Naive thymus-derived CD4-positive, alpha-beta T cell (primary cell): ENCODE measurements at regions of chr16 and their contacts with region 1.

Region 1: GRCh38 chr16:53054670-53055485 is at the start of gene CHD9:
- DNase-seq: peak; percentile 48 to 84 (median 75)
- ATAC-seq: peak; percentile 96
- H3K4me3 ChIP-seq: peak within 1 kb of the TSS; percentile 74
- H3K4me3 Mint-ChIP-seq: peak within 1 kb of the TSS; percentile 77 to 88 (median 84)
- H3K27ac ChIP-seq: peak within 1 kb of the TSS; percentile 36
- H3K27ac Mint-ChIP-seq: peak within 1 kb of the TSS in 6 of 9 donors; percentile 6 to 86 (median 41)
- H3K4me1 ChIP-seq: peaks cover 6 to 9% of the 10 kb centered on the region in 2 donors
- H3K4me1 Mint-ChIP-seq: peaks cover 6 to 42% (median 12%) of the 10 kb centered on the region in 7 donors
- H3K27me3 ChIP-seq: no peaks in the 10 kb centered on the region
- H3K27me3 Mint-ChIP-seq: peaks cover 0 to 8% (median 5%) of the 10 kb centered on the region in 5 donors
- total RNA-seq, gene CHD9: 23.8 to 46.4 (median 36.3) TPM

Region 2: GRCh38 chr16:52896484-52897164 is 158.3 kb before region 1 on chr16:
- CTCF ChIA-PET with region 1: no interaction called
- POLR2A ChIA-PET with region 1: no interaction called
- intact Hi-C with region 1: no loop called
- DNase-seq: no peak
- ATAC-seq: no peak
- H3K4me3 ChIP-seq: no peak overlapping the region
- H3K4me3 Mint-ChIP-seq: no peak overlapping the region
- H3K27ac ChIP-seq: no peak overlapping the region
- H3K27ac Mint-ChIP-seq: no peak overlapping the region
- H3K4me1 ChIP-seq: no peaks in the 10 kb centered on the region
- H3K4me1 Mint-ChIP-seq: no peaks in the 10 kb centered on the region
- H3K27me3 ChIP-seq: no peaks in the 10 kb centered on the region
- H3K27me3 Mint-ChIP-seq: peaks cover 0 to 31% (median 28%) of the 10 kb centered on the region in 5 donors

Region 3: DNA sequence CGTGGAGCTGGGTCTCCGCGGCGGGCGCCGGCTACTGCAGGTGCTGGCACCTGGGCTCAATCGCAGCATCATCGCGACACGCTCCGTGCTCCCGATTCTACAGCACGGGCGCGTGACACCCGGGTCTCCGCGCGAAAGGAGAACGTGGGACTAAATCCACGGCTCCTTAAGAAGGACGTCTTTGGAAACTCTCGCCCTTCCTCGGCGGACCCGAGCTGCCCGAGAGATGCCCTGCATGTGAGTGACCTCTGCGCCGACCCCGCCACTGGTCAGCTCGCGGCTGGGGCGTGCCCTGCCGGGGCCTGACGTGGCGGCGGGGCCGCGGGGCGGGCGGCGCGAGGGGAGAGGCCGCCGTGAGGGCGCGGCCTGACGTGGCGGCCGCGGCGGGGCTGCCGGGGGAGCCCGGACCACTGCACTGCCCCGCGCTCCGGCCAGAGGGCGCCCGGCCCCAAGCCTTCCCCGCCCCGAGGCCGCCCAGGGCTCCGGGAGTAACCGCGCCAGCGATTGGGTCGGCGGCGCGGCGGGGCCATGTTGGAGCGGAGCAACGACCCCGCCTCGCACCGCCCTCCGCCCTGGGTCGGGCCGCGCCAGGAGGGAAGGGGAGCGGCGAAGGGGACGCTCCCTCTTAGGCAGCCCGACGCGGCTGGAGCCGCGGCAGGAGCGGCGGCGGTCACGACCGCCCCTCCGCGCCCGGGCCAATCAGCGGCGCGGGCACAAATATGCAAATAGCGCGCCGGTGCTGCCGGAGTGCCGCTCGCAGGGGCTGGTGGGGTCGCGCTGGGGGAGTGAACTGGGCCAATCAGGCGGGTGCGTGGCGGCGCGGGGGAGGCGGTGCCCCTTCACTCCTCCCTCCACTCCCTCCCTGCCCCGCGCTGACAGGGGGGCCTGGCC is 75.5 kb after region 1 on chr16:
- CTCF ChIA-PET with region 1: no interaction called
- POLR2A ChIA-PET with region 1: interaction called, 3 read pairs
- intact Hi-C with region 1: loop called (anchors 1 kb)
- DNase-seq: peak; percentile 93 to 96 (median 95)
- ATAC-seq: peak; percentile 94
- H3K4me3 ChIP-seq: peak overlapping the region; percentile 77
- H3K4me3 Mint-ChIP-seq: peak overlapping the region; percentile 69 to 94 (median 84)
- H3K27ac ChIP-seq: peak overlapping the region; percentile 73
- H3K27ac Mint-ChIP-seq: peak overlapping the region; percentile 57 to 90 (median 79)
- H3K4me1 ChIP-seq: peaks cover 0 to 4% of the 10 kb centered on the region in 2 donors
- H3K4me1 Mint-ChIP-seq: peaks cover 6 to 29% (median 12%) of the 10 kb centered on the region in 7 donors
- H3K27me3 ChIP-seq: no peaks in the 10 kb centered on the region
- H3K27me3 Mint-ChIP-seq: peaks cover 0 to 6% (median 0%) of the 10 kb centered on the region in 5 donors

Region 4: DNA sequence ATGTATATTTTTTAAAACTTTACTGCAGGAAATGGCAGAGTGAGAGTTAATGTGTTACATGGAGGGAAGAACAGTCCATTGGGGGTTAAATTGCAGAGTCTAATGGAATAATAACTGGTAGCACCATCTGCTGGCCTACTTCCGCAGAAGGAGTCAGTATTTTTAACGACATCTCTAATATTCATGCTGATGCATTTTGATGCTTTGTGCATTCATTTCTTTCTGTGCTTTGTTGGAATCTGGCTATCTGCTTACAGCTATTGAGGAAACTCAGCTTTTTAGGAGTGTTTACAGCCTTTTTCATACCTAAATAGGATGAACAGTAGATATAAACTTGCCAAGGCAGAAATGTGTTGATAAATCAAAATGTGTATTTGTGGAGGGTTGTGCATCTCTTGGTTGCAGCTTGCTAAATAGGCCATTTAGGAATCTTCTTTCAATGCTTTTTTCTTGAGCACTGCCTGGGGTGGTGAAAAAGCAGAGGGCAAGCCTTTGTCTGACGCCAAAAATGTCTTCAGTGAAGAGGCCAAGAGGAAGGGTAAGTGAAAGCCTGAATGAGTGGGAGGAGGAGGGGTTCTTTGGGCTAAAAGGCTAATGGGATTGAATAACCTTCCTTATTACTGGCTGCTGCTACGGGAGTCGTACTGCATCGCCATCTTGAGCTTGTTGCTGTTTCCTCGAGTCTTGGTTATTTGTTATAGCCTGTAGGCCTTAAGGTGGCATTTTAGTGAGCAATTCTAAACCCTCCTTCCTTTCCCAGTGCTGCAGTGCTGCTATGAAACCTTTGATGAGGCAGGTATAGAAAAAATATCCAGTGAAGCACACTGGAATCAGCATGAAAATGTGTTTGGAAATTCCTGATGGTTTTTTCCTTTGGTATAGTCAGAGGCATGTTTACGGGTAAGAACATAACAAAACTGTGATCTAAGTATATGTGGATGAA is 153.2 kb after region 1 on chr16:
- CTCF ChIA-PET with region 1: interaction called, 6 read pairs
- POLR2A ChIA-PET with region 1: no interaction called
- intact Hi-C with region 1: loop called (anchors 1 to 2 kb)
- DNase-seq: peak in 5 of 9 donors; percentile 5 to 27 (median 17)
- ATAC-seq: peak; percentile 89
- H3K4me3 ChIP-seq: no peak overlapping the region
- H3K4me3 Mint-ChIP-seq: peak overlapping the region; percentile 24 to 85 (median 72)
- H3K27ac ChIP-seq: no peak overlapping the region
- H3K27ac Mint-ChIP-seq: peak overlapping the region; percentile 51 to 90 (median 81)
- H3K4me1 ChIP-seq: peaks cover 0 to 7% of the 10 kb centered on the region in 2 donors
- H3K4me1 Mint-ChIP-seq: peaks cover 16 to 36% (median 30%) of the 10 kb centered on the region in 7 donors
- H3K27me3 ChIP-seq: no peaks in the 10 kb centered on the region
- H3K27me3 Mint-ChIP-seq: no peaks in the 10 kb centered on the region

Region 5: DNA sequence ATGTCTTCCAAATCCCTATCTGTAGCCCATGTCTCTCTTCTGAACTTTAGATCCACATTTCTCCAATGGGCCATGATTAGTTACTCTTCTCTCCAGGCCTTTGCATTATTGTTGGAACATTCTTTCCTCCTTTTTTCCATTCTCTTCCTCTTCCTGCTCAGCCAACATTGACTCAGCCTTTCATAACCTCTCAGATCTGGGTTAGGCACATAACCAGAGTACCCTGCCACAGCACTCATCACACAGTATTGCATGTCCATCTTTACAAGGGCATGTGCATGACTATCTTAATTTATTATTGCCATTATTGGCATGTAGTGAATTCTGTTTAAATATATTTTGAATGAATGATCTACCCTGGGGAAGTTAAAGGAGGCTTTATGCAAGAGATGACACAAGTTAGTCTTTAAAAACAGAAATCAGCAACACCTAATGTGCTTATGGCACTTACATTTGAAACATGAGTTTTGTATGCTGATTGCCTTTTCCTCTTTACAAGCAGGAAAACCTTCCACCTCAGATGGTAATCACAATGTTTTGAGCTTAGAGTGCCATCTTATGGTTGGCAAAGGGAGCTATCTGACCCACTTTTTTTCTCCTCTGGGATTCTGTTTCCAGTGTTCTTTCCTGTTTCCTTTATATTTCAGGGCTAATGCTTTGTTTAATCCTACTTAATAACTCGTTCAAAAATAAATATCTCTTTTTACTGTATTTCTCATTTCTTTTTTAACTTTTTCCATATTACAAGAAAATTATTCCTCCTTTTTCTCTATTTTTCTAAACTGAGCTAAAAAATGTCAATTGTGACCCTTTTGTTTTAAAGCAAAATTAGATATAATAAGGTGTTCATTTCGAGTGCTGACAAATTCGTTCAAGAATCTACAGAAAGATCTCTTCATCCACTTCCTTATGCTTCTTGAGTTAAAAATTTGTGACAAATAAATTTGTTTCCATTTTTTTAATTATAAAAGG is 228.4 kb after region 1 on chr16:
- CTCF ChIA-PET with region 1: interaction called, 6 read pairs
- POLR2A ChIA-PET with region 1: no interaction called
- intact Hi-C with region 1: loop called (anchors 1 kb)
- DNase-seq: peak in 4 of 9 donors; percentile 3 to 29 (median 6)
- ATAC-seq: no peak
- H3K4me3 ChIP-seq: no peak overlapping the region
- H3K4me3 Mint-ChIP-seq: no peak overlapping the region
- H3K27ac ChIP-seq: no peak overlapping the region
- H3K27ac Mint-ChIP-seq: no peak overlapping the region
- H3K4me1 ChIP-seq: no peaks in the 10 kb centered on the region
- H3K4me1 Mint-ChIP-seq: no peaks in the 10 kb centered on the region
- H3K27me3 ChIP-seq: no peaks in the 10 kb centered on the region
- H3K27me3 Mint-ChIP-seq: no peaks in the 10 kb centered on the region

Region 6: GRCh38 chr16:53503270-53503923 is 448.5 kb after region 1 on chr16:
- CTCF ChIA-PET with region 1: no interaction called
- POLR2A ChIA-PET with region 1: no interaction called
- intact Hi-C with region 1: loop called in 1 of 2 experiments (anchors 2 kb)
- DNase-seq: peak; percentile 94 to 100 (median 100)
- ATAC-seq: peak; percentile 94
- H3K4me3 ChIP-seq: peak overlapping the region; percentile 66
- H3K4me3 Mint-ChIP-seq: peak overlapping the region; percentile 86 to 97 (median 94)
- H3K27ac ChIP-seq: peak overlapping the region; percentile 79
- H3K27ac Mint-ChIP-seq: peak overlapping the region; percentile 82 to 98 (median 92)
- H3K4me1 ChIP-seq: peaks cover 25 to 38% of the 10 kb centered on the region in 2 donors
- H3K4me1 Mint-ChIP-seq: peaks cover 36 to 54% (median 45%) of the 10 kb centered on the region in 7 donors
- H3K27me3 ChIP-seq: no peaks in the 10 kb centered on the region
- H3K27me3 Mint-ChIP-seq: no peaks in the 10 kb centered on the region

Region 7: GRCh38 chr16:53703590-53704444 is 648.9 kb after region 1 on chr16 and contains the starts of genes FTO and RPGRIP1L:
- CTCF ChIA-PET with region 1: no interaction called
- POLR2A ChIA-PET with region 1: no interaction called
- intact Hi-C with region 1: loop called in 1 of 2 experiments (anchors 10 kb)
- DNase-seq: peak; percentile 85 to 97 (median 93)
- ATAC-seq: peak; percentile 95
- H3K4me3 ChIP-seq: peak within 1 kb of the TSS; percentile 78
- H3K4me3 Mint-ChIP-seq: peak within 1 kb of the TSS; percentile 85 to 100 (median 98)
- H3K27ac ChIP-seq: peak within 1 kb of the TSS; percentile 66
- H3K27ac Mint-ChIP-seq: peak within 1 kb of the TSS; percentile 90 to 99 (median 95)
- H3K4me1 ChIP-seq: peaks cover 15 to 16% of the 10 kb centered on the region in 2 donors
- H3K4me1 Mint-ChIP-seq: peaks cover 17 to 48% (median 42%) of the 10 kb centered on the region in 7 donors
- H3K27me3 ChIP-seq: no peaks in the 10 kb centered on the region
- H3K27me3 Mint-ChIP-seq: no peaks in the 10 kb centered on the region
- total RNA-seq, gene FTO: 47.2 to 63.5 (median 57.9) TPM
- total RNA-seq, gene RPGRIP1L: 2.0 to 6.1 (median 3.6) TPM